ENCODE measurements at regions of chr4 and their contacts with region 1.

Region 1: GRCh38 chr4:99816545-99817308 is at the start of gene DAPP1:
- DNase-seq: peak; percentile 60
- CTCF ChIP-seq: no peak

Region 2: DNA sequence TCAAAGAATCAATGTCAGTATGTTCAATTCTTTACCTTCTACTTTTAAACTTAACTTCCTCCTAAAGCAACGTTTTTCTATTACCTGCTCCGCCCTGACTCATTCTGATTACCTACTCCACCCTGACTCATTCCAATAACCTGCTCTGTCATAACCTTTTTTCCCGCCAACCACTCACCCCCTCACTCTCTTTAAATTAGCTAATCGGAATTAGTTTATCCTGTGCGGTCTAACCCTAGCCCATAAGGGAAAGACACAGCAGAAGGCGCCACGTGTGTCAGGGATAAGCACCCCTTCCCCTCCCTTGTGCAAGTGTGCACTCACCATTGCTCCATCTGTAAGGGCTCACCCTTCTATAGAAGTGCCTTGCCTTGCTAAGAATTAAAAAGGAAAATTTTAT is 952.2 kb before region 1 on chr4:
- in situ Hi-C with region 1: no loop called
- DNase-seq: no peak
- CTCF ChIP-seq: no peak

Region 3: DNA sequence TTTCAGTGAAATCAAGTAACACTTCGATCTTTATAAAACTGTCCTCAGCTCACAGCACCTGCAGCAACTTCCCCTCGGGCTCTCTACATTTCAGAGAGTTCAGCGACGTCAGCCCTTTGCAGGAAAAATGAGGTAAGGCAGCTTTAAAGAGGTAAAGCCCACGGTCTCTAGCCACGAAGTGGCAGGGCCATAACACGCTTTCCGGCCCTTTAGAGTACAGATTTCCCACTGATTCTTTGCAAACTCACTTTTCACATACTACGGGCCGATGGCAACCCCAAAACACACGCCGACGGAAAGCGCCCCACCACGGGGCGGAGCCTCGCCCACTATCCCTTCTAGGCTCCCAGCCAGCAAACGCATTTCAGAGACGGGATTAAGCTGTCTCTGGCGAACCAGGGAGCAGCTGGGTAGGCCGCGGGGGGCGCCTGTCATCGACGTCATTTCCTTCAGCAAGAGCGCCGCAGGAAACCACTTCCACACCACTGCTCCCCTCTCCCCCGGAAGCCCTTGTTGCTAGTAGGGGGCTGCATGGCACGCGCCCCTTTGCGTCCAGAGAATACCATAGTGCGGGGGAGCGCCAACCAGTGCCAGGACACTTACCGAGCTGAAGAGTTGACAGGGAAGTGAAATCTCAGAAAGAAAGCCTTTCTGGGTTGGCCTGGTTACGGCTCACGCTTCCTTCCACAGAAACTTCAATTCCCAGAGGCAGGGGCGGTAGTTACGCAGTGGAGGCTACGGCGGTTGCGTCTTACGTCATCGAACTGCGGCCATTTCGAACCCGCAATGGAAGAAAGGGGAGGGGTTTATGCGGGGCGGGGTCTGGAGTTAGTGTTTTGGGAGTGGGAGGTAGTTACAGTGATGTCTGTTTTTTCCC is 253.2 kb before region 1 on chr4 and contains the start of gene TRMT10A:
- in situ Hi-C with region 1: loop called (anchors 5 kb)
- DNase-seq: peak; percentile 85
- CTCF ChIP-seq: no peak

Region 4: DNA sequence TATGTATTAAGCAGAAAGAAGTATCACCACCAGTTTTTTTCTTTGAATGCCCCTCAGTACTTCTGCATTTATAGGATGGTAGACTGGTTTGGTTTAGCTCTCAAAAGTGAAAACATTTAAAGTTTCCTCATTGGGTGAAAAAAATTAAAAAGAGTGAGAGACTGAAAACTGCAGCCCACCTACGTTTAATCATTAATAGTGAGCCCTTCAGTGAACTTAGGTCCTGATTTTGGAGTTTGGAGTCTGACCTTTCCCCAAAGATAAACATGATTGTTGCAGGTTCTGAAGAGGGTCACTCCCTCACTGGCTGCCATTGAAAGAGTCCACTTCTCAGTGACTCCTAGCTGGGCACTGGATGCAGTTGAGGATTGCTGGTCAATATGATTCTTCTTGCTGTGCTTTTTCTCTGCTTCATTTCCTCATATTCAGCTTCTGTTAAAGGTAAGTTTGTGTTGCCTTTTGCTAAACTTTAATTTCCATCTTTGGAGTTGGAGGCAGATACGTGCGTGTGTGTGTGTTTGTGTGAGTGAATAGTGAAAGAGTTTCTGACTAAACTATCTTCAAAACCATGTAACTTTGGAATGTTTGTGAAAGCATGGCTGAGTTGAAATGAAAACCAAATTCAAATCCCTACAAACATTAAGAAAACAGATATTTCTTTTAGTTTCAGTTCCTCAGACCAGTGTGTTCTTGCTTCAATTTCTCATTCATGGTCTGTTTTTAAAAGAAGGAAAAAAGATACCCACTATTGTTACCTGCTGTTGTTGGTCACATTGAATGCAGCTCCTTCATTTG is 242.0 kb before region 1 on chr4 and contains the start of gene MTTP:
- in situ Hi-C with region 1: no loop called
- DNase-seq: peak; percentile 14
- CTCF ChIP-seq: no peak

Region 5: DNA sequence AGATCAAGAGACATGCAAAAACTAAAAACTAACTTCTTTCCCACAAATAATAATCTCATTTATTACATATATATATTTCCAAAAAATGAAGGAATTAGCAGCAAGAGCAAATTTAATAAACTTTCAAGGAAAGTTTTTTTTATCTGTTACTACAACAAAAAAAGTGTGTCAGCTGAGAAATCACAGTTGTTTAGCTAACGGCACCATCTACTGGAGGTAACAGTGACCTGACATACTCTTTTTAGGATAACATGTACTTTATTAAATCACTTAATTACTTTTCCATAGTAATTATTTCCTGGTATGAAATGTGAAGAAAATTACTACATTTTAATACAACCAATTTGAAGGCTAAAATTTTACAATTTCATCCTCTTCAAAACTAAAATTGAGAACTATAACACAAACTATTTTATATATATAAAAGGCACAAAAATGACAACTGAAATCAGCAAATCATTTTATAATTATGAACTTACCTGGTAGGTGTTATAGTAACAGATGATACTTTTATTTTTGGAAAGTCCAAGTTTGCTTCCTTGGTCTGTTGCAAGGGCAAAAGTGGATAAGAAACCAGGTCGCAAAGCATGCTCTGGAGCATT is 68.4 kb after region 1 on chr4:
- in situ Hi-C with region 1: loop called (anchors 10 kb)
- DNase-seq: peak; percentile 30
- CTCF ChIP-seq: peak; percentile 58

Region 6: DNA sequence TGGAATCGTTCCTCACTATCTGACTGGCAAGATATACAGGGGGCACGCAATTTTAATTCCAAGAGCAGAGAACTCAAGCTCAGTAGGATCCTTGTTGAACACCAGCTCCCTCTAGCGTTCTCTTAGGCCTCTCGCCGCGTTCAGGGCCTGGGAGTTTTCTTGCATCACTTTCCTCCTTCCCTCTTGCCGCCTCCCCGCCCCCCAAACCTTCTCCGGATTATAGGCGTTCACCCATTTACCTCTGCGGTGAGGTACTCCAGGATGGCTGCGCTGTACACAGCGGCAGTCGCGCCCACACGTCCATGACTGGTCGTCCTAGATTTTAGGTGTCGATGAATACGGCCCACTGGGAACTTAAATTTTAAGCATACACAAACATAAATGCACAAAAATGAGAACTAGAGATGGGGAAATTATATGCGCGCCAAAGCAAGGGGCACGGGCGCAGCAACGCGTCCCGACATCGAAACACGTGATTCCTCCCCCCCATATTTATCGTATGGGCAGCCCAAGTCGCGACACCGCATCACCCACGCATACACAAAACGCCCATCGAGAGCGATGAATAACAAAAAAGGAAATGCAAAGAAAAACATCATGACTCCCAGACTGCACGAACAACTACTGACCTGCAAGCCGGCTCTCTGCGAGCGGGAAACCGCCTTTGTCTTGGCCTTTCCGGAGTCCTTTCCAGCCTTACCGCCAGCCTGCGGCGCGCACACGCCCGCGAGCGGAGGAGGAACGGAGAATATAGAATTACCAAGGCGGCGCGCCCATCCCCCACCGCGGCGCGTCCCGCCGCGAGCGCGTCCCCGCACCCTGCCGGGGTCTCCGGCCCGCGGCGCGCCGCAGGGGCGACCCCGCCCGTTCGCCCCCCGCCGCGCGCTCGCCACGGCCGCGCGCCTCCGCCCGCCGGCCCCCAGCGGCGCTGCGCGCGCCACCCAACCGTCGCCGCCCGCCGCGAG is 132.6 kb after region 1 on chr4:
- in situ Hi-C with region 1: loop called (anchors 10 kb)
- DNase-seq: peak; percentile 80
- CTCF ChIP-seq: peak; percentile 85

Region 7: DNA sequence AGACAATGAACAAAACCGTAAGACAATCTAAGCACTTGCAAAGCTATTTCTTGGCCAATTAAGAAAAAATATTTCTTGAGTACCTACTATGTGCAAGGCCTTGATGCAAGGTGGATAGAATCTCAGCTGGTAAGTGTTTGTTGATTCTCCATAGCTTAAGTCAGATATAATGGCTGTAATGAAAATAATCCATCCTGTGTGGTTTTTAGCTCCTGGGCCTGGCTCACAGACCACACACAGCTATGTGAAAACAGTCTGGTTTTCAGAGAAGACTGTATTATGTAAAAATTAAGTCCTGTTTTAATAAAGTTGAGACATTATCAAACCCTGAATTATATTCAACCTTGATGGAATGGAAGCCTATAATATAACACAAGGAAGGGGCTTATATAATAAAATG is 381.3 kb after region 1 on chr4:
- in situ Hi-C with region 1: no loop called
- DNase-seq: no peak
- CTCF ChIP-seq: no peak